Breast epithelium (tissue), 4 donors: ENCODE measurements at regions of chr15 and their contacts with region 1.

Region 1: DNA sequence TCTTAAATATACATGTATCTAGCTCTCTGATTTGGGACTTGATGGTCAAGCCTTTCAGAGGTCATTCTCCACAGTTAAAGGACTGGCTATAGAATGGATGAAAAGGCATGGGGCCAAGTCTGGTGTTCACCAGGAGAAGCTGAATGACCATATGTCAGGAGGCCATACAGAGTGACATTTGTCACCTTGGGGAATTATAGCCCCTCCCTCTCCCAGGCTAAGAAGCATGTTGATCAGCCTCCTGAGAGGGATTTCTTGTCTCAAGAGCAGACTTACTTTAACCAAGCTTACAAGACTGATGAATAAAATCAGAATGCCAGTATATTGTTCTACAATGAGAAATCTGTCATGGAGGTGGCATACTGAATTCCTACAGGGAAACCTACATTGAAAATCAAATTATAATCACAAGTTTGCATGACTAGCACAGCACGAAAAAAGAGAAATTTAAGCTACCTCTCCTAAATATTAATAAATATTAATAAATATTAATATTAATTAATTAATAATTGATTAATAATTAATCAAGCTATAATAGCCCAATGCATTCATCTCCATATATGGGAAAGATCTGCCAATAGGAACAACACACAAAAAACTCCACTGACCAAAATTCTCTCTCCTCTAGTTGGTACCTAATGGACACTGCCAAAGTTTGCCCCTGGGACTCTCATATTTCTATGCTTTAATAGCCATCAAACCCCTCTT is 47.3 kb downstream of the ATP8B4 start:
- DNase-seq: no peak
- H3K4me3 ChIP-seq: no peak overlapping the region
- H3K27ac ChIP-seq: no peak overlapping the region
- H3K4me1 ChIP-seq: no peaks in the 10 kb centered on the region
- H3K27me3 ChIP-seq: no peaks in the 10 kb centered on the region
- CTCF ChIP-seq: no peak
- POLR2A ChIP-seq: no peak

Region 2: DNA sequence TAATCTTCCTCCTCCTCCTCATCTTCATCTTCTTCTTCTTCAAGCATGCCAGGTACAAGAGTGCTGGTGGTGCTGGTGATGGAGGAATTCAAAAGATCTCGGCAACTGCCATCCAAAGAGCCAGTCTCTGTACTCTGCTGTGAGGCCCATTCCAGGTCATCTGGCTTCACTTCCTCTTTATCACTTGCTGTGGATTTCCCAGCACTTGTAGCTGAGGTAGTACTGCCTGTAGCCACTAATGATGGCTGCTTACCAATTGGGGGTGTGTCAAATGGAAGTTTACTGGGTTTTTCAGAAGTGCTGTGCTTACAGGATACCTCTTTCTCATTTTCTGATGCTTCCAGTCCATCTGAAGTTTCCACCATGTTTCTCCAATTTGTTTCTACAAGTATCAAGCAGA is 1079.2 kb before region 1 on chr15:
- intact Hi-C with region 1: loop called (anchors 5 kb)
- DNase-seq: no peak
- H3K4me3 ChIP-seq: no peak overlapping the region
- H3K27ac ChIP-seq: no peak overlapping the region
- H3K4me1 ChIP-seq: no peaks in the 10 kb centered on the region
- H3K27me3 ChIP-seq: no peaks in the 10 kb centered on the region
- CTCF ChIP-seq: no peak
- POLR2A ChIP-seq: no peak